ENCODE measurements at regions of chr21 and their contacts with region 1.

Region 1: DNA sequence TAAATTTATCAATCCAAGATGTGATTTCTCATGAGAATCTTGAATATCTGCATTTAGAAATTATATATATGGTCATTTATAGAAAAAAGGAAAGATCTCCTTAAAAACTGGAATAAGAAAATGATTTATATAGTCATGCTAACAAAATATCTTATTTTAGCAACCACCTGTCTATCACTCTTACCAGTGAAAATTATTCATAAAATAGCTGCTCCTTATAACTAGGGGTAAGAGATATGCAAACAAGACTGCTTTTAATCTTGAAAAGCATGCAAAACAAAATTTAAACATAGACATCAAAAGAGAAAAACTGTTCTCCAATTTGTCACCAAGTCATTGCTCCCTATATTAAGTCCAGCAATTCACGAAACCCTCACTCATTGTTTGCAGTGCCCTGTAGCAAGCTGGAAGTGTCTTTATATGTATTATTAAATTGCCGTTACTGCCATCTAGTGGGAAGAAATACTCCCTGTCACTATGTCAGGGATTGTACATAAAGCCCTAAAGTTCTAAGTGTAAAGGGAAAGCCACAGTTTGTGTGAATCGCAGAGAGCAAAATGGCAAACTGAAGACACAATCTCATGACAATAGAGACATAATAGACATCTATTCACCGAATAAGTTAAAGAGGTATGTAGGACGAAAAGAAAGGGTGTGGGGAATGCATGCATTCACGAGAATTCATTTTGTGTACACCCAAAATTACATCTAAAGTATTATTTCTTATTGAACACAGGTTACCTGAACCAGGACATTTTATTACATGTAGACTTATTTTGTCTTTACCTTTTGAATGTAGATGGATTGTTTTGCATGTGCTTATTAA is 600.5 kb downstream of the USP25 start:
- DNase-seq: peak in 1 of 2 donors; percentile 65
- ATAC-seq: peak; percentile 86 to 98 (median 96)
- H3K4me3 ChIP-seq: peak overlapping the region in 3 of 10 donors; percentile 1 to 10 (median 5)
- H3K27ac ChIP-seq: no peak overlapping the region
- H3K4me1 ChIP-seq: peaks cover 0 to 7% (median 0%) of the 10 kb centered on the region in 9 donors
- H3K27me3 ChIP-seq: no peaks in the 10 kb centered on the region
- CTCF ChIP-seq: peak; percentile 46 to 84 (median 76)

Region 2: GRCh38 chr21:15894596-15894995 is 435.7 kb before region 1 on chr21:
- intact Hi-C with region 1: loop called in 1 of 10 experiments (anchors 10 kb)
- DNase-seq: no peak
- ATAC-seq: no peak
- H3K4me3 ChIP-seq: no peak overlapping the region
- H3K27ac ChIP-seq: no peak overlapping the region
- H3K4me1 ChIP-seq: peaks cover 0 to 12% (median 3%) of the 10 kb centered on the region in 9 donors
- H3K27me3 ChIP-seq: no peaks in the 10 kb centered on the region
- CTCF ChIP-seq: peak in 6 of 9 donors; percentile 39 to 61 (median 52)

Region 3: GRCh38 chr21:15908187-15908586 is 422.1 kb before region 1 on chr21:
- intact Hi-C with region 1: loop called in 1 of 10 experiments (anchors 10 kb)
- DNase-seq: no peak
- ATAC-seq: no peak
- H3K4me3 ChIP-seq: no peak overlapping the region
- H3K27ac ChIP-seq: no peak overlapping the region
- H3K4me1 ChIP-seq: no peaks in the 10 kb centered on the region
- H3K27me3 ChIP-seq: no peaks in the 10 kb centered on the region
- CTCF ChIP-seq: no peak

Region 4: DNA sequence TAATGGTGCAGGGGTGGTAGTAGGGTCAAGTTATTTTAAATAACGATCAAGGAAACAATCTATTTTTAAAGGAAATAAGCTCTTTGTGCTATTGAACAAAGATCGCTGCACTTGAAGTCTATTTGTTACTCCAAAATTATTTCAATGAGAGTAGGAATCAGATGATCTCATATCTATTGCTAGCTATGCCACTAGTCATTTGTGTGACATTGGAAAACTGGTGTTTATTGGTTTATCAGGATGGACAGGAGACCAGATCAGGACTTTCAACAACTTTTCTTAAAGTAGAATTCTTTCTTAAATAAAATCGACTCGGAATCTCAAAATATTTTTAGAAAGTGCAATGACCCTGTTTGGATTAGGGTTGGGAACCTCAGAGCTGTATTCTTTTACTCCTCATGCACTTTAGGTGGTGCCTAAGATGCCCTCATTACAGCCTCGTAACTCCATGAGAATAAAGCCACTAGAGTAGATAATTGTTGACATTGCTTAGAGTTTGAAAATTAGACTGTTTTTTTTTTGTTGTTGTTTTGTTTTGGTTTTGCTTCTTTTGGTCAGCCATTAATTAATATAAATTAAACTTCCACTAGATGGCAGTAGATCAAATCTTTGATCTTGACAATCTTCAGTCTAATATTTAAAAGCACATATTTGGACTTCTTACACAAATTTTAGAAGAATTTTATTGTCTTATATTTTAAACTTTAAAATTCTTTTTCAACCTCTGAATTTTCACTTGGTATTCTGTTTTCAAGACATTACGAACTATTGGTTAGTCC is 248.1 kb before region 1 on chr21:
- intact Hi-C with region 1: loop called (anchors 1 to 10 kb)
- DNase-seq: no peak
- ATAC-seq: peak in 2 of 8 donors; percentile 33 to 38
- H3K4me3 ChIP-seq: peak overlapping the region in 5 of 10 donors; percentile 17 to 35 (median 33)
- H3K27ac ChIP-seq: peak overlapping the region in 1 of 10 donors; percentile 23
- H3K4me1 ChIP-seq: peaks cover 0 to 14% (median 4%) of the 10 kb centered on the region in 9 donors
- H3K27me3 ChIP-seq: no peaks in the 10 kb centered on the region
- CTCF ChIP-seq: peak; percentile 28 to 73 (median 54)

Region 5: GRCh38 chr21:16194095-16194787 is 136.1 kb before region 1 on chr21:
- intact Hi-C with region 1: loop called in 4 of 10 experiments (anchors 1 to 10 kb)
- DNase-seq: peak; percentile 48 to 71
- ATAC-seq: peak; percentile 80 to 95 (median 92)
- H3K4me3 ChIP-seq: peak overlapping the region; percentile 9 to 59 (median 50)
- H3K27ac ChIP-seq: peak overlapping the region; percentile 47 to 86 (median 74)
- H3K4me1 ChIP-seq: peaks cover 0 to 35% (median 4%) of the 10 kb centered on the region in 9 donors
- H3K27me3 ChIP-seq: no peaks in the 10 kb centered on the region
- CTCF ChIP-seq: peak in 6 of 9 donors; percentile 28 to 65 (median 48)

Region 6: DNA sequence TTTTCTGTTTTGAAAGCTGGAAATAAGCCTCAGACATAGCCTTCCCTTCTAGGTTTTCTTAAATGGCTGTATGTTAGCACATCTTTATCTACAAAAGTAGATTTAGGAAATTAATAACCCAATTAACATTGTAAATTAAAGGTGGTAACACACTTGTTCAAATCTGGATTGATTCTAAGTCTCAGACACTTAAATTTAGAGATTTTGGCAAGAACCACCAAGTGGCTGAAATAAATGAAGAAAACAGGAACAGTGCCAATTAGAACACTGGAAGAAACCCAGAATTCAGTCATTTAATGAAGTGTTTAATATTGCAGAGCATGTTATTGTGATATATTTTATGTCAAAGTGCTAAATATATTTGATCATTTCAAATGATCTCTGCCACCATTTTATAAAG is 27.7 kb after region 1 on chr21:
- intact Hi-C with region 1: loop called in 1 of 10 experiments (anchors 1 kb)
- DNase-seq: no peak
- ATAC-seq: no peak
- H3K4me3 ChIP-seq: no peak overlapping the region
- H3K27ac ChIP-seq: no peak overlapping the region
- H3K4me1 ChIP-seq: peaks cover 0 to 8% (median 0%) of the 10 kb centered on the region in 9 donors
- H3K27me3 ChIP-seq: no peaks in the 10 kb centered on the region
- CTCF ChIP-seq: no peak

Measured in heart right ventricle (tissue), 16 donors.